ENCODE measurements at regions of chr1 and their contacts with region 1.

Region 1: GRCh38 chr1:28886731-28887418 is 27.5 kb upstream of the EPB41 start:
- DNase-seq: peak; percentile 86

Region 2: GRCh38 chr1:28703629-28704028 is 183.2 kb before region 1 on chr1:
- in situ Hi-C with region 1: no loop called
- DNase-seq: no peak

Region 3: DNA sequence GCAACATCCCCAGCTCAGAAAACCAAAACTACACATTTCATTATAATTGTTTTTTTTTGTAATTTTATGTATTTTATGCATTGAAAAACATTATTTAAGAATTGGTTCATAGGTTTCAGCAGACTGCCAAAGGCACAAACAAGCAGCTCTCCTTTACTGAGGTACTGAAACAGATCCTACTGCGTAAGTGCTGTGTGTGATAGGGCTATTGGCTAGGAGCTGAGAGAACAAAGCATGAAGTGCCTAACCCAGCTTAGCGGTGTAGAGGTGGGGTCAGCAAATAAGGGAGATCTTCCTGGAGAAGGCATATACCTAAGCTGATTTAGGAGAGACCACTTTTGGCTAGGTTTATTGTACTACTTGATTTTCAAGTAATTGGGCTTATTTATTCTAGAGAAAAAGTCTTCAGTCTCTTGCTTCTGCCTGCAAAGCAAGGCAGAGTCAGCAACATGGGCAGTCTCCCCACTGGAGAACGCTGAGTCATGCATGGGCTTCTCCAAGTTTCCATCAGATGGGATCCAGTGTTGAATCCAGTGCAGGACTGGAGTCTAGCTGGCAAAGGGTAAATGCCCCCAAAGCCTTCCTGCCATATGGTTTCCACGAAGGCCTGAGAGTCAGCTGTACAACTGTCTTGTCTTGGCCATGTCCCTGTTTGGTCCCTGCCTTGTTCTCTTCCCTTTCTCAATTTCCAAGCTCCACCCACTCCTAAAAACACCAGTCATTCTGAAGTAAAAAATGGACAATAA is 168.1 kb before region 1 on chr1:
- in situ Hi-C with region 1: no loop called
- DNase-seq: no peak

Region 4: GRCh38 chr1:29033829-29034466 is 147.1 kb after region 1 on chr1:
- in situ Hi-C with region 1: loop called (anchors 10 kb)
- DNase-seq: peak; percentile 75

Region 5: GRCh38 chr1:29181413-29182225 is 294.7 kb after region 1 on chr1 and contains the start of gene SRSF4:
- in situ Hi-C with region 1: loop called (anchors 25 kb)
- DNase-seq: peak; percentile 99